ENCODE measurements at regions of chr16 and their contacts with region 1.

Region 1: DNA sequence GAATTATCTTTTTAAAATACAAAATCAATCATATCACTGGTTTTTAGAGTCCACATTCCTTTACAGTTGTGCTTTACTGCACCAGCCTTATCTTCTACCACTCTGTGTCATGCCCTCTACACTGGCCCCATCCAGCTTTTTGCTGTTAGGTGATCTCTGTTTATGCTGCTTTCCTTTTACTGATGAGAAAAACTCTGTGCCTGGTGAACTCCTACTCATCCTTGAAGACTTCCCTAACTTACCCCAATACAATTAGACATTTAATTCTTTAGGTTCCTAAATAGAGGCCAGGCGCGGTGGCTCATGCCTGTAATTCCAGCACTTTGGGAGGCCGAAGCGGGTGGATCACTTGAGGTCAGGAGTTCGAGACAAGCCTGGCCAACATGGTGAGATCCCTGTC is 64.6 kb downstream of the MRTFB start:
- DNase-seq: no peak
- ATAC-seq: no peak
- H3K4me3 Mint-ChIP-seq: no peak overlapping the region
- H3K27ac Mint-ChIP-seq: no peak overlapping the region
- H3K4me1 Mint-ChIP-seq: peaks cover 10% of the 10 kb centered on the region
- H3K27me3 Mint-ChIP-seq: no peaks in the 10 kb centered on the region
- CTCF ChIP-seq: no peak

Region 2: GRCh38 chr16:14151256-14152030 is 15.7 kb after region 1 on chr16:
- CTCF ChIA-PET with region 1: no interaction called
- POLR2A ChIA-PET with region 1: no interaction called
- intact Hi-C with region 1: loop called (anchors 1 kb)
- DNase-seq: no peak
- ATAC-seq: no peak
- H3K4me3 Mint-ChIP-seq: no peak overlapping the region
- H3K27ac Mint-ChIP-seq: no peak overlapping the region
- H3K4me1 Mint-ChIP-seq: no peaks in the 10 kb centered on the region
- H3K27me3 Mint-ChIP-seq: no peaks in the 10 kb centered on the region
- CTCF ChIP-seq: no peak

Region 3: DNA sequence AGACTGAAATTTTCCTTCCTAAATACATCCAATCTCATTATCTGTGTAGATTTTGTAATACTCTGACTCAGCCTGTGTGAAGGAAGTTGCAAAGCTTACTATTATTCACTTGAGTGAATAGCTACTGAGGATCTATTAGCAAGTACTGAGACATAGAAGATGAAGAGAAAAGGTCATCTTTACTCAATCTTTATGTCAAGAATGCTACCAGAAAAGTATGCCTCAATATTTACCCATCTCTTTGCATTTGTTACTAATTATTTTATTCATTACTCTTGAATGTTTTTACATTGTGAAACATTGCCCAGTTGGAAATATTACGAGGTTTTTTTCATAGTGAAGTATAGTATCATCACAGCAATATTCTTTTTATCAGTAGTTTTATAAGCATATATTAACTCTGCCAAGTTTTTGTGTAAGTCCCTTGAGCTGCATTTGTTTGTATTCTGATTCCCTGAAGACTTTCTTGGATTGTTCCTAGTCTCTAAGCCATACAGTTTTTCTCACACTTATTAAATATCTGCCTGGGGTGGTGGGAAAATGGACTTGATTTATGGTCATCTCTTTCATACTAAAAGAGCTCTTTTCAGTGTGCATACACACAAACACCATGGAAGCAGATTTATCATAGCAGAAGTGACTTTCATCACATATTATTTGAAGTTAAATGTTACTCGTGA is 45.8 kb after region 1 on chr16:
- CTCF ChIA-PET with region 1: no interaction called
- POLR2A ChIA-PET with region 1: no interaction called
- intact Hi-C with region 1: no loop called
- DNase-seq: no peak
- ATAC-seq: no peak
- H3K4me3 Mint-ChIP-seq: no peak overlapping the region
- H3K27ac Mint-ChIP-seq: no peak overlapping the region
- H3K4me1 Mint-ChIP-seq: no peaks in the 10 kb centered on the region
- H3K27me3 Mint-ChIP-seq: no peaks in the 10 kb centered on the region
- CTCF ChIP-seq: no peak

Region 4: DNA sequence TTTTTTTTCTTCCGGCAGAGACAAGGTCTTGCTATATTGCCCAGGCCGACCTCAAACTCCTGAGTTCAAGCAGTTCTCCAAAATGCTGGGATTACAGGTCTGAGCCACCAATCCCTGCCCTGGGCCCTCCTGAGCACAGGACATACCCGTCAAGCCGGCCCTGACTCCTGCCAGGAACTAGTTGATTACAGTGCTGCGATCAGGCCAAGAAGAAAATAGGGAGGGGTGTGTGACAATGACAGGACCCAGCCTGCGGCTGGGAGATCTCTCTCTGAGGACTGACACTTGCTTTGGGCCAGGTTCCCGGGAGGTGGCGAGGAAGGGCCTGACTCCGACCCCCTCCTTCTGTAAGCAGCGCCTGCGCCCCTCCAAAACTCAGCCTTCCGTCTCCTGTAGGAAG is 212.0 kb after region 1 on chr16:
- CTCF ChIA-PET with region 1: no interaction called
- POLR2A ChIA-PET with region 1: no interaction called
- intact Hi-C with region 1: no loop called
- DNase-seq: no peak
- ATAC-seq: no peak
- H3K4me3 Mint-ChIP-seq: no peak overlapping the region
- H3K27ac Mint-ChIP-seq: no peak overlapping the region
- H3K4me1 Mint-ChIP-seq: peaks cover 13% of the 10 kb centered on the region
- H3K27me3 Mint-ChIP-seq: no peaks in the 10 kb centered on the region
- CTCF ChIP-seq: no peak

Measured in activated B cell treated with CpG ODN at 0.5 μM for 24 hours (primary cell).